ENCODE measurements at regions of chr2 and their contacts with region 1.

Region 1: GRCh38 chr2:172972005-172972619 is 103.5 kb upstream of the MAP3K20 start:
- DNase-seq: peak; percentile 27 to 42
- ATAC-seq: peak in 3 of 8 donors; percentile 34 to 48 (median 35)
- H3K4me3 ChIP-seq: no peak overlapping the region
- H3K27ac ChIP-seq: no peak overlapping the region
- H3K4me1 ChIP-seq: peaks cover 8 to 40% (median 24%) of the 10 kb centered on the region in 9 donors
- H3K27me3 ChIP-seq: no peaks in the 10 kb centered on the region
- CTCF ChIP-seq: peak; percentile 59 to 89 (median 72)

Region 2: DNA sequence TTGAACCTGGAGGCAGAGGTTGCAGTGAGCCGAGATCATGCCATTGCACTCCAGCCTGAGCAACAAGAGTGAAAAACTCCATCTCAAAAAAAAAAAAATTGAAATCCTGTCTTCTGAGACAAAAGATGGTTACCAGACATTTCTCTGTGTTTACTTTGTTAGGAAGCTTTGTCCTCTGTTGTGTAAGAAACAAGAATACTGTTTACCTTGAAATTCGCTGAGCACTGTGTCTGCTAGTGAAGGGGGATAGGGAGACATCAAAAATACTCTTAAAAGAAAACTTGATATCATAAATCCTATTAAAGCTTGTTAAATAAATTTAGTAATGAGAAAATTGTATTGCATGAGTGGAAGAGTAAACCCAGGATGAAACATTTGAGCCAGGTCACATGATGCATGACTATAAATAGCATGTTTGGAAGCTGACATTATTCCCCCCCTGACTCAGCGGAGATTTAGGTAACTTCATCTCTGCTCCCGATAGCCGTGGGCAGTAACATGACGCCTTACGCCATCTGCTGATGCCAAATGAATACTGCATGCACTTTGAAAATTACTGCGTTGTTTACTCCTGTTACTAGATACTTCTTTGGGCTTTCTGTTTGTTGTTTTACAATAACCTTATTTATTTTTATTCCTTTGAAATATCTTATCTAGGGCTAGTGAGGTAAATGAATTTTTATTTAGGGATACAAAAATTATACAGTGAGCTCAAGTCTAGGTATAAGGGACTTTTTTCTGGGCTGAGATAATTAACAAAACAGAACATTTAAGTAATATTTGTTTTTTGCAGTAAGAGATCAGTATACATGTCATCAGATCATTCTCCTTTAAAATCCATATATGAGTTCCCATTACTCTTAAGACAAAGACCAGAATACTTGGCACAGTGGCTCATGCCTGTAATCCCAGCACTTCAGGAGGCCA is 238.4 kb after region 1 on chr2:
- intact Hi-C with region 1: loop called in 1 of 10 experiments (anchors 5 kb)
- DNase-seq: peak; percentile 20 to 87
- ATAC-seq: peak; percentile 87 to 94 (median 92)
- H3K4me3 ChIP-seq: no peak overlapping the region
- H3K27ac ChIP-seq: peak overlapping the region; percentile 8 to 83 (median 59)
- H3K4me1 ChIP-seq: peaks cover 9 to 60% (median 35%) of the 10 kb centered on the region in 9 donors
- H3K27me3 ChIP-seq: no peaks in the 10 kb centered on the region
- CTCF ChIP-seq: peak; percentile 69 to 97 (median 89)

Region 3: DNA sequence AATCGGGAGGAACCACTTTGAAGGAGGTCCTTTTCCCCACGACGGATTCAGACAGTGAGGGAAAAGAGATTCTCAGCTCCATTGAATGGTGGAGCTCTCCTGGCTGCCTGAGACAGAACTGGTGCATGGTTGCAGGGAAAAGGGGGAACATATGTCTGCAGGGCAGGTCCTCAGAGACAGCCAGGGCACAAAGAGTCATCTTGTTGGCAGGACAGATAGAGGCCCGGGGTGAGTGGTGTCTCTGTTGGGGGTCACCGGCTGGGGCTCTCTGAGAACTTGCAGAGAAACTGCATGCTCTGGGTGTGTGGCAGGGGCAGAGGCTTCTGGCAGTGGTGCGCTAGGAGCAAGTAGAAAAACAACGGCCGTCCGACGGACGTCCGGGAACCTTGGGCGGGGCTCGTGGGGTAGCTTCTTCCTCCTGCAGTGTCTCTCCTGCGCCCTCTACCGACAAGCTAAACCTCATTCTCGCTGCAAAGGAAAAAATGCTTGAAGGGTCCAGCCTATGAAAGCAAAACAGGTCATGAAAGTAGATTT is 476.9 kb after region 1 on chr2:
- intact Hi-C with region 1: loop called in 1 of 10 experiments (anchors 5 kb)
- DNase-seq: peak; percentile 80 to 82
- ATAC-seq: peak; percentile 88 to 97 (median 94)
- H3K4me3 ChIP-seq: peak overlapping the region in 7 of 10 donors; percentile 15 to 44 (median 38)
- H3K27ac ChIP-seq: peak overlapping the region in 8 of 10 donors; percentile 5 to 73 (median 69)
- H3K4me1 ChIP-seq: peaks cover 0 to 11% (median 2%) of the 10 kb centered on the region in 9 donors
- H3K27me3 ChIP-seq: peaks cover 0 to 8% (median 0%) of the 10 kb centered on the region in 7 donors
- CTCF ChIP-seq: peak; percentile 65 to 84 (median 75)

Measured in heart right ventricle (tissue), 16 donors.